ENCODE measurements at regions of chr16 and their contacts with region 1.

Region 1: GRCh38 chr16:48385272-48386150 is at the start of gene SIAH1:
- DNase-seq: peak; percentile 81
- H3K4me3 ChIP-seq: peak within 1 kb of the TSS; percentile 73 to 93
- H3K27ac ChIP-seq: peak within 1 kb of the TSS; percentile 97 to 99
- H3K4me1 ChIP-seq: peaks cover 11% of the 10 kb centered on the region
- H3K27me3 ChIP-seq: no peaks in the 10 kb centered on the region
- CTCF ChIP-seq: peak in 1 of 4 experiments; percentile 11
- POLR2A ChIP-seq: peak; percentile 53
- total RNA-seq, gene SIAH1: 24.0 to 36.1 TPM

Region 2: DNA sequence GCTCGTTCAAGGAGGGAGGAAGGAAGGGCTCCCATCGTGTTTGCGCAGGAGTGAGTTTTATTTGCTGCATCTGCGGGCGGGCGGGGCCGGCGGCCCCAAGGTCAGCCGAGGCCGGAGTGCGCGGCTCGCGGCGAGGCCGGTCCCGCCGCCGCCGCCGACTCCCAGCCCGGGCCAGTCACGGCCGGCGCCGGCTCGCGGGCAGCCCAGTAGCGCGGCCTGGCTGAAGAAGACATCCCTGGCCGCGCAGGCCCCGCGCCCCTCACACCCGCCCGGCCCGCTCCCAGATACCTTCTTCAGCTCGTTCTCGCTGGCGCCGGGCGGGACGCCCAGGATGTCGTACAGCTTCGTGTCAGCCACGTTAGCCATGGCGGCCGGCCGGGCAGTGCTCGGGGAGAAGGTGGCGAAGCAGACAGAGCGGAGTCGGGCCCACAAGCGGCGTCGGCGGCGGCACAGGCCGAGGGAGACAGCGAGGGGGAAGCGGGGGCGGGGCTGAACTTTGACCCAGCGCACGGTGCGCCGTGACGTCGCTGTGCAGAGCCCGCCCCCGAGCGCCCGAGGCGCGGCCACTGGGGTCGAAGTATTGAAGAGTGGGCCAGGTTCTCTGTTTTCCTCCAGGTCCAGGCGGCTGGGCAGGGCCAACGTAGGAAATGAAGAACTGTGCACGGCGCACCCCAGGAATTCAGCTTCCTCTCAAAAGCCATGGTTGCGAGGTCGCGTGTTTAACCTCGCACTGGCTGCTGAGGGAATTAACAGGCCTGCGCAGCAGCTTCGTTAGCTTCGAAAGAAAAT is 1412.1 kb before region 1 on chr16 and contains the start of gene DNAJA2:
- intact Hi-C with region 1: loop called (anchors 10 kb)
- DNase-seq: peak; percentile 86
- H3K4me3 ChIP-seq: peak within 1 kb of the TSS; percentile 80 to 86
- H3K27ac ChIP-seq: peak within 1 kb of the TSS; percentile 97
- H3K4me1 ChIP-seq: peaks cover 7% of the 10 kb centered on the region
- H3K27me3 ChIP-seq: no peaks in the 10 kb centered on the region
- CTCF ChIP-seq: peak in 2 of 4 experiments; percentile 19 to 23
- POLR2A ChIP-seq: peak; percentile 85
- total RNA-seq, gene DNAJA2: 41.1 to 64.4 TPM

Region 3: DNA sequence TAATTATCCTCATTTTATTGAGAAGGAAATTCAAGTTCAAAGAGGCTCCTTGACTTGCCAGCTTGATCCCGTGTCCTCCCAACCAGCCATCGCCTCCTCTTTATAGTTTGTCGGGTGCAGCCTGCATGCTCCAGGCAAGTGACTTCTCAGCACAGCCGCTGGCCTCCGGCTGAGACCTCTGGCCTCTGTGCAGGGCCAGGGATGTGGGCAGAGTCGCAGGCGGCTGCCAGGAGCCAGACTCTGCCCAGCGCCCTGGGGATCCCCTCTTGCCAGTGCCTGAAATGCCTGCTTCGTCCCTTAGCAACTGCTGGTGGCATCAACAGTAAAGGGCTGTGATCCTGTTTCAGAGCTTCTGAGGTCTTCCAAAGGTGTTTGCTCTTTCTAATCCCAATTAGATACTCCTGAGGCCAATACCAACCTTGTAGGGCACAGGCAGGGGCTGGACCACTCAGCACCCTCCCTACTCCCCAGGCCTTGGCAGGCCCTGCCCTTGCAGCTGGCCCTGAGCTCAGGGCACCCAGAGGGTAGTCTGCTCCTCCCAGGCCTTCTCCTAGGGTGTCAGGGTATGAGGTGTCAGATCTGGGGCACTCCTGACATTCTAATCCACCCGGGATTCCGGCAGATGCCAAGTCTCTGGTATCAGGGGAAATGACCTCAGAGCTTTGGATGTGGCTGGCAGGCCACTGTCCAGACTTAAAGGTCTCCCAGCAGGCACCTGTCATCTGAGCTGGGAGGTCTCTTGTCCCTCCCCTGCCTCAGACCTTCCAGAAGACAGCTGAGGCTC is 67.7 kb after region 1 on chr16:
- intact Hi-C with region 1: no loop called
- DNase-seq: no peak
- H3K4me3 ChIP-seq: no peak overlapping the region
- H3K27ac ChIP-seq: no peak overlapping the region
- H3K4me1 ChIP-seq: no peaks in the 10 kb centered on the region
- H3K27me3 ChIP-seq: no peaks in the 10 kb centered on the region
- CTCF ChIP-seq: no peak
- POLR2A ChIP-seq: no peak

Region 4: GRCh38 chr16:48609652-48610029 is 224.1 kb after region 1 on chr16:
- intact Hi-C with region 1: loop called (anchors 5 kb)
- DNase-seq: peak; percentile 49
- H3K4me3 ChIP-seq: peak overlapping the region; percentile 89 to 94
- H3K27ac ChIP-seq: peak overlapping the region; percentile 87 to 90
- H3K4me1 ChIP-seq: peaks cover 27% of the 10 kb centered on the region
- H3K27me3 ChIP-seq: no peaks in the 10 kb centered on the region
- CTCF ChIP-seq: no peak
- POLR2A ChIP-seq: no peak